Endothelial cell of umbilical vein (primary cell): ENCODE measurements at regions of chr9 and their contacts with region 1.

Region 1: DNA sequence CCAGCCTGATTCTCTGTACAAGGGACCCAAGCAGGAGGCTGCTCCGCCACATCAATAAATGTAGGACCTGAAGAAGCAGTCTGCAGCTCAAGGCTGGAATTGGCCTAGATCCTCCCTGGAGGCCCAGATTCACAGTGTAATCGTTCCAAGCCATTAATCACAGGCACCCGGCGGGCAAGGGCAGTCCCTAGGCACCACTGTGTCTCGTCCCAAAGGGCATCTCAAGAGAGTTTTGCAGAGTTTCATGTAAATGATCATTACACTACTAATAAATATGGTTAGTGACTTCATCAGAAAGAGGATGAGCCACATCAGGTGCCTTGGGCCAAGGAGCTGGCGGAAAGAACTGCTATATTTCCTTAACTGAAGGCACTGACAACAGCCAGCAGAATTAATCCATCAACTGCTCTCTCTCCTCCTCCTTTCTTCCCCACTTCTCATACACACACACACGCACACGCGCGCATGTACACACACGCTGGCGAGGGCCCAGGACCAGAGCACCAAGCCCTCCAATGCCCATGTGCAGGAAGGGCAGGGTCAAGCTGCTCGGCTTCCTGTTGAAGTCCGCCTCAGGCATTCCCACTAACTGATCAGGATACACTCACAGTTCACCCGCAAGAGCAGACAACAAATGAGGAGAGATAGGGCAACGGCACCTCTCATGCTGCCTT is 33.9 kb downstream of the GNAQ start:
- DNase-seq: peak; percentile 94
- H3K4me3 ChIP-seq: peak overlapping the region in 1 of 3 experiments; percentile 21
- H3K27ac ChIP-seq: peak overlapping the region; percentile 60
- H3K4me1 ChIP-seq: peaks cover 59% of the 10 kb centered on the region
- H3K27me3 ChIP-seq: no peaks in the 10 kb centered on the region
- CTCF ChIP-seq: no peak
- POLR2A ChIP-seq: no peak

Region 2: DNA sequence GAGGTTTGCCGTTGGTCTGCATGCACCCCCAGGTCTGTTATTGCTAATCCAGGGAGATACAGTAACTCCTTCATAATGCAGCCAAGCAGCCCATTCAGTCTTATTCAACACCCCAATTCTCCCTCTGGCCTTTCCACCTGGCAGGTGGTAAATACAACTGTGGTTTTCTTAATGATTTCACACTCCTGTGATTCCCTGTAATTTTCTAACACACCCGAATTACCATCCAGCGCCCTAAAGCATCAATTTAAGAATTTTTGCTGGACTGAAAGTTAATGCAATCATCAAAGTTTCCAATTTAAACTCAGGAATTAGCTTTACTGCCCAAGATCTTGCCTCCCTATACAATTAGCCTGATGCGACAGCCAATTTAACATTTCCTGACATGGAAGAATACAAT is 28.7 kb before region 1 on chr9:
- CTCF ChIA-PET with region 1: no interaction called
- POLR2A ChIA-PET with region 1: no interaction called
- dilution Hi-C with region 1: no loop called
- intact Hi-C with region 1: no loop called
- DNase-seq: no peak
- H3K4me3 ChIP-seq: no peak overlapping the region
- H3K27ac ChIP-seq: no peak overlapping the region
- H3K4me1 ChIP-seq: peaks cover 9% of the 10 kb centered on the region
- H3K27me3 ChIP-seq: no peaks in the 10 kb centered on the region
- CTCF ChIP-seq: no peak
- POLR2A ChIP-seq: no peak

Region 3: GRCh38 chr9:78029551-78030295 is 32.0 kb after region 1 on chr9:
- CTCF ChIA-PET with region 1: interaction called, 10 read pairs
- POLR2A ChIA-PET with region 1: no interaction called
- dilution Hi-C with region 1: no loop called
- intact Hi-C with region 1: loop called (anchors 1 kb)
- DNase-seq: peak; percentile 67
- H3K4me3 ChIP-seq: peak overlapping the region; percentile 88 to 95 (median 91)
- H3K27ac ChIP-seq: peak overlapping the region; percentile 39
- H3K4me1 ChIP-seq: peaks cover 53% of the 10 kb centered on the region
- H3K27me3 ChIP-seq: no peaks in the 10 kb centered on the region
- CTCF ChIP-seq: no peak
- POLR2A ChIP-seq: no peak

Region 4: DNA sequence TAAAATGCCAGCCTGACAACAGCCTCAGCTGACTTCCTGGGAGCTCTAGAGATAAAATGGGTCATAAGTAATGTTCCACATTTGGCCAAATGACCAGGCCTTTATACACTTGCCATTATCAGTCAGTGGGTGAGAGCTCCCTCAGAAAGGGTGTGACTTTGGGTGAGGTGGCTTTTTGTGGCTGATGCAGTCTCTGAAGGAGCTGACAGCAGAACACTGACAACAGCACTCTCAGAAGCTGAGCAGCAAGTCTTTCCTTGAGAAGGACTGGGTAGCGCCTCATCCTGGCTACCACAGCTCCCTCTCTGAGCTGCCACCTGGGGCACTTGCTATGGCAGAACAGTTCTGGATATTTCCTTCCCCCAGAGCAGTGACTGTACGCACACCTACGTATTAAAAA is 55.9 kb after region 1 on chr9:
- CTCF ChIA-PET with region 1: no interaction called
- POLR2A ChIA-PET with region 1: no interaction called
- dilution Hi-C with region 1: no loop called
- intact Hi-C with region 1: no loop called
- DNase-seq: no peak
- H3K4me3 ChIP-seq: no peak overlapping the region
- H3K27ac ChIP-seq: no peak overlapping the region
- H3K4me1 ChIP-seq: no peaks in the 10 kb centered on the region
- H3K27me3 ChIP-seq: peaks cover 0 to 3% of the 10 kb centered on the region in 2 experiments
- CTCF ChIP-seq: no peak
- POLR2A ChIP-seq: no peak

Region 5: DNA sequence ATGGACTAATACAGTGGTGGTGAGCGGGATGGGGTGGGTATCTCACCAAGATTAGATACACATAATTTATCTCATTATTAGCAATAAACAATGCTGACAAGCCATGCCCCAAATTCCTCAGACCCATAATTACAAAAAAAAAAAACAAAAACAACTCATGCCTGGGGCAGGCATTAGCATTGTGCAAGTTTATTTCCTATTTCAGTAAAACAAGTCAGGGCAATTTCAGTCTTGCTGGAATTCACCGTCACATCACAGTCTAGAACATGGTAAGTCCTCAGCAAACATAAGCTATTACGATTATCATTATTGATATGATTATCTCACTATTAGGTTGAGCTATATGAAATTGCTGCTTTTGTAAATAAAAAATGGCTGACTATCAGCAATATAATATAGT is 91.4 kb after region 1 on chr9:
- CTCF ChIA-PET with region 1: no interaction called
- POLR2A ChIA-PET with region 1: no interaction called
- dilution Hi-C with region 1: no loop called
- intact Hi-C with region 1: no loop called
- DNase-seq: no peak
- H3K4me3 ChIP-seq: no peak overlapping the region
- H3K27ac ChIP-seq: no peak overlapping the region
- H3K4me1 ChIP-seq: no peaks in the 10 kb centered on the region
- H3K27me3 ChIP-seq: no peaks in the 10 kb centered on the region
- CTCF ChIP-seq: no peak
- POLR2A ChIP-seq: no peak

Region 6: GRCh38 chr9:78187763-78188484 is 190.2 kb after region 1 on chr9:
- CTCF ChIA-PET with region 1: no interaction called
- POLR2A ChIA-PET with region 1: no interaction called
- dilution Hi-C with region 1: no loop called
- intact Hi-C with region 1: no loop called
- DNase-seq: no peak
- H3K4me3 ChIP-seq: no peak overlapping the region
- H3K27ac ChIP-seq: no peak overlapping the region
- H3K4me1 ChIP-seq: no peaks in the 10 kb centered on the region
- H3K27me3 ChIP-seq: no peaks in the 10 kb centered on the region
- CTCF ChIP-seq: no peak
- POLR2A ChIP-seq: no peak